ENCODE measurements at regions of chr4 and their contacts with region 1.

Region 1: GRCh38 chr4:159446266-159446976 is 343.5 kb downstream of the RAPGEF2 start:
- DNase-seq: peak; percentile 61
- ATAC-seq: peak; percentile 100
- H3K4me3 ChIP-seq: no peak overlapping the region
- H3K27ac ChIP-seq: no peak overlapping the region
- H3K4me1 ChIP-seq: peaks cover 0 to 3% of the 10 kb centered on the region in 2 experiments; a peak in 1 of 4 replicates
- H3K27me3 ChIP-seq: no peaks in the 10 kb centered on the region
- CTCF ChIP-seq: peak; percentile 64 to 95 (median 90); a peak in 5 of 6 replicates
- POLR2A ChIP-seq: no peak
- RAD21 ChIP-seq: peak; percentile 90

Region 2: DNA sequence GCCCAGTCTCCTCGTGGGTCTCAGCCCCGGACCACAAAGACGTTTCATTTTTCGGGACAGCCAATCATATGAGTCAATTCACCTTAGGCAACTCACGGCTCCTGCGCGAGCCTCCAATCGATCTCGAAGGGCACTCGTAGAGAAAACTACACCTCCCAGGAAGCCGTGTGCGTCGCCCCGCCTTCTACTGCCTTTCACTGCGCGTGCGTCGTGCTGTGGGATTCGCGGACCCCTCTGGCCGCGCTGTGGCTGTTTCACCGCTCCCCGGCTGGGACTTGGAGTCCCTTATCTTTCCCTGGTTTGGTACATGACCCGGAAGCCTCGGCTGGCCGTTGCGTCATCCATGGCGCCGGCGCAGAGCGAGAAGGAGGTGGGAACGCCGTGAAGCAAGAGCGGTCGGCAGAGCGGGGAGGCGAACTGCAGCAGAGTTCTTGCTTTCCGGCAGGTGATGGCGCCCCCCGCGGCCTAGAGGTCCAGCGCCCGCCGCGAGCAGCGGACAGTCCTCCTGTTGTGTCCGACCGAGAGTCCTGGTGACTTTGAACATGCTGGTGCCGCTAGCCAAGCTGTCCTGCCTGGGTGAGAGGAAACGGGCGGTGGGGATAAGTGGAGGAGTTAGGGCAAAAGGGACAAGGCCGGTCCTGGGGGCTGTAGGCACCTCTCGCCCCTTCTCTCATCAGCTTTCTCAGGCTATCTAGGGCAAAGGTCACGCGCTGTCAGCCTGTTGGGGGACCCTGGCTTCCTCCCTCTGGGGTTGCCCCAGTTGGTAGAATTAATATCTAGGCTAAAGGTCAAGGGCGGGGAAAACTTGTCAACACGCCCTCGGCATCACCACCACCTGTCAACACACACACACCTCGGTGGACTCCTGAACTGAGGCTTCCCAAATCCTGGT is 774.3 kb before region 1 on chr4 and contains the start of gene ETFDH:
- CTCF ChIA-PET with region 1: no interaction called
- POLR2A ChIA-PET with region 1: no interaction called
- RAD21 ChIA-PET with region 1: no interaction called
- intact Hi-C with region 1: loop called (anchors 5 kb)
- DNase-seq: peak; percentile 99
- ATAC-seq: peak; percentile 86
- H3K4me3 ChIP-seq: peak within 1 kb of the TSS; percentile 80 to 86
- H3K27ac ChIP-seq: peak within 1 kb of the TSS; percentile 70
- H3K4me1 ChIP-seq: peaks cover 9 to 17% of the 10 kb centered on the region in 2 experiments; a peak in 3 of 4 replicates
- H3K27me3 ChIP-seq: no peaks in the 10 kb centered on the region
- CTCF ChIP-seq: peak in 2 of 3 experiments; percentile 57; a peak in 4 of 6 replicates
- POLR2A ChIP-seq: peak; percentile 2
- RAD21 ChIP-seq: no peak
- total RNA-seq, gene ETFDH: 22.2 TPM

Region 3: DNA sequence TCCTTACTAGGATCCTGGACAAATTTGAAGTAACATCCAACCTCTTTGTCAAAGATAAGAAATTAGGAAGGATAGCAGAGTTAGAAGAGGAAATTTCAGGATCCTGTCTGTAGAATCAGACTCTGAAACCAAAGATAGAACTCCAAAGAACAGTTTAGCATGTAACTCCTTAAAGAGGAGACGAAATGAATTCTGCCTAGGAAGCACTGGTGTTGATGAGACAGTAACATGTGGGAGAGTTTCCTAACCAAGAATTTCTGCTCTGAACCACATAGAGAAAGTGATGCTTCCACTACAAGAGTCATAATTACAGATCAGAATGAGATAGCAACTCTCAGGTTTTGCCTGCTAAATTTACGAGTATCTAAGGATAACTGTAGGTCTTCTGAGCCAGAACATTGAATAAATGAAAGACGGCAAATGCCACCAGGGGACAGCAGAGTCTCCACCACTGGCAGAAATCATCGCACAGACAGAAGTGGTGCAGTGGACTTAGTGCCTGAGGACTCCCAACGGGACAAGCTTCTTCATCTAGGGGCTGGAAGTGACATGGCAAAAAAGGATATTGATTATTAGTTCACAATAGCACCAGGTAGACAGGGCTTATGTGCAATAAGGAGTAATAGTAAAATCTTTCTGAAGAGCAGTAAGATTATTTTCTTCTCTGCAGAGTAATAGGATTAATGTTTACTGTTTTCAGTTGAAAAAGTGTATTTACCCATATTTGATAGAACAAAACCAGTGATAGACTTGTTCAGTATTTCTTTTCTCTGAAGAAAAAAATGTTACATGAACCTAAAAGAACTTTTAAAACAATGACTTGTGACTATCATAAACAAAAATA is 716.5 kb before region 1 on chr4:
- CTCF ChIA-PET with region 1: no interaction called
- POLR2A ChIA-PET with region 1: no interaction called
- RAD21 ChIA-PET with region 1: no interaction called
- intact Hi-C with region 1: loop called (anchors 5 kb)
- DNase-seq: peak; percentile 61
- ATAC-seq: peak; percentile 99
- H3K4me3 ChIP-seq: no peak overlapping the region
- H3K27ac ChIP-seq: no peak overlapping the region
- H3K4me1 ChIP-seq: no peaks in the 10 kb centered on the region
- H3K27me3 ChIP-seq: peaks cover 7% of the 10 kb centered on the region; the same call in 1 of the 2 replicates
- CTCF ChIP-seq: peak; percentile 71 to 86 (median 81)
- POLR2A ChIP-seq: no peak
- RAD21 ChIP-seq: peak; percentile 90

Region 4: GRCh38 chr4:158856852-158857251 is 589.6 kb before region 1 on chr4:
- CTCF ChIA-PET with region 1: interaction called, 3 read pairs
- POLR2A ChIA-PET with region 1: no interaction called
- RAD21 ChIA-PET with region 1: no interaction called
- intact Hi-C with region 1: loop called (anchors 1 kb)
- DNase-seq: peak; percentile 26
- ATAC-seq: peak; percentile 95
- H3K4me3 ChIP-seq: no peak overlapping the region
- H3K27ac ChIP-seq: no peak overlapping the region
- H3K4me1 ChIP-seq: no peaks in the 10 kb centered on the region
- H3K27me3 ChIP-seq: no peaks in the 10 kb centered on the region
- CTCF ChIP-seq: peak; percentile 49 to 83 (median 67)
- POLR2A ChIP-seq: no peak
- RAD21 ChIP-seq: peak; percentile 91

Region 5: GRCh38 chr4:159206427-159206871 is 240.0 kb before region 1 on chr4:
- CTCF ChIA-PET with region 1: no interaction called
- POLR2A ChIA-PET with region 1: no interaction called
- RAD21 ChIA-PET with region 1: no interaction called
- intact Hi-C with region 1: loop called (anchors 2 kb)
- DNase-seq: no peak
- ATAC-seq: no peak
- H3K4me3 ChIP-seq: no peak overlapping the region
- H3K27ac ChIP-seq: no peak overlapping the region
- H3K4me1 ChIP-seq: no peaks in the 10 kb centered on the region
- H3K27me3 ChIP-seq: no peaks in the 10 kb centered on the region
- CTCF ChIP-seq: no peak
- POLR2A ChIP-seq: no peak
- RAD21 ChIP-seq: no peak

Region 6: DNA sequence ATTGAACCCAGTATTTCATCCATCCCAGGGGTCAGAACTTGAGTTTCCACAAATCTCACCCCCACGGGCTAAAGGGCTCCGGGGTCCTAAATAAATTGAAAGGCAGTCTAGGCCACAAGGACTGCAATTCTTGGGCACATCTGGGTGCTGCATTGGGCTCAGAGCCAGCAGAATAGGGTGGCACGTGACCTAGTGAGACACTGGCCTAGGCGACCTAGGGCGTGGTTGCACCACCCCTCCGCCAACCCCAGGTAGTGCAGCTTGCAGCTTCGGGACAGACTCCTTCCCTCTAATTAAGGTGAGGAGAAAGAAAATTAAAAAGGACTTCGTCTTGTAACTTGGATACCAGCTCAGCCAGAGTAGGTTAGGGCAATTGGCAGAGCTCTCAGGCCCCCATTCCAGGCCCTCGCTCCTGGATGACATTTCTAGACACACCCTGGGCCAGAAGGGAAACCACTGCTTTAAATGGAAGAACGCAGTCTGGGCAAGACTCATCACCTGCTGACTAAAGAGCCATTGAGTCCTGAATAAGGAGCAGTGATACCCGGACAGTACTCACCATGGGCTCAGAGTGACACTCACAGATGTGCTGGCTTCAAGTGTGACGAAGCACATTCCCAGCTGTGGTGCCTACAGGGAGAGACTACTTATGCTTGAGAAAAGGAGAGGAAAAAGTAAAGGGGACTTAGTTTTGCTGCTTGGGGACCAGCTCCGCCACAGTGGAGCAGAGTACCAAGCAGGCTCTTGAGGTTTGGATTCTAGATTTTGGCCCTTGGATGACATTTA is 1982.0 kb after region 1 on chr4:
- CTCF ChIA-PET with region 1: no interaction called
- POLR2A ChIA-PET with region 1: no interaction called
- RAD21 ChIA-PET with region 1: no interaction called
- intact Hi-C with region 1: no loop called
- DNase-seq: no peak
- ATAC-seq: no peak
- H3K4me3 ChIP-seq: no peak overlapping the region
- H3K27ac ChIP-seq: no peak overlapping the region
- H3K4me1 ChIP-seq: no peaks in the 10 kb centered on the region
- H3K27me3 ChIP-seq: no peaks in the 10 kb centered on the region
- CTCF ChIP-seq: no peak
- POLR2A ChIP-seq: no peak
- RAD21 ChIP-seq: no peak

Measured in HCT116 (cell line).